Heart left ventricle (tissue), 16 donors: ENCODE measurements at regions of chr6 and their contacts with region 1.

Region 1: DNA sequence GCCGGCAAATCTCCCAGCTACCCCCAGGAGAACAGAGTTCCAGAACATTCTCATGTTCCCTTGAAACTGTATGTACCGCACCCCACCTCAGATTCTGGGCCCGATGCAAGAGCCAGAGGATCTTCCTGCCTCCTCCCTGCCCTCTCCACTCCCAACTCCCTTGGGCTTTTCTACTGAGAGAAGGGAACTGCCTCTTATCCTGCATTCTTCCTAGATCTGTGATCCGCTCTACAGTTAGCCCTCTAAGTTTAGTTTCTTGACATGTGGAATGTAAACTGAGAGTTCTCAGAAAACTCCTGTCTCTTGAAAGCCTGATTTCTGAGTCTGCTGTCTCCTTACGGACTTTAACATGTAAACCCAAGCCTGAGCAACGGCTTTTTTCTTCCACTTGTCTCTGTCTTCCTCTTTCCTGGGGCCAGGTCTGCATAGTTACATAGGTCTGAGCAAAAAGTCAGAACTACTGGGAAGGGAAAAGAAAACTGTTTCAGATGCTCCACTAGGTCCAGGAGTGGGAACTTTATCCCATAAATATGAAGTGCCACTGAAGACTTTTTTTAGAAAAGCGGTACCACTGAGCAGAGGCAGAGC is 86.5 kb upstream of the TNFAIP3 start:
- DNase-seq: no peak
- ATAC-seq: peak in 1 of 4 donors; percentile 40
- H3K4me3 ChIP-seq: no peak overlapping the region
- H3K27ac ChIP-seq: peak overlapping the region in 2 of 12 donors; percentile 15 to 74
- H3K4me1 ChIP-seq: peaks cover 0 to 23% (median 0%) of the 10 kb centered on the region in 12 donors
- H3K27me3 ChIP-seq: no peaks in the 10 kb centered on the region
- CTCF ChIP-seq: no peak
- POLR2A ChIP-seq: no peak

Region 2: GRCh38 chr6:137744877-137745276 is 35.7 kb before region 1 on chr6:
- intact Hi-C with region 1: loop called in 1 of 10 experiments (anchors 5 kb)
- DNase-seq: no peak
- ATAC-seq: no peak
- H3K4me3 ChIP-seq: no peak overlapping the region
- H3K27ac ChIP-seq: no peak overlapping the region
- H3K4me1 ChIP-seq: peaks cover 0 to 14% (median 2%) of the 10 kb centered on the region in 12 donors
- H3K27me3 ChIP-seq: no peaks in the 10 kb centered on the region
- CTCF ChIP-seq: no peak
- POLR2A ChIP-seq: no peak

Region 3: DNA sequence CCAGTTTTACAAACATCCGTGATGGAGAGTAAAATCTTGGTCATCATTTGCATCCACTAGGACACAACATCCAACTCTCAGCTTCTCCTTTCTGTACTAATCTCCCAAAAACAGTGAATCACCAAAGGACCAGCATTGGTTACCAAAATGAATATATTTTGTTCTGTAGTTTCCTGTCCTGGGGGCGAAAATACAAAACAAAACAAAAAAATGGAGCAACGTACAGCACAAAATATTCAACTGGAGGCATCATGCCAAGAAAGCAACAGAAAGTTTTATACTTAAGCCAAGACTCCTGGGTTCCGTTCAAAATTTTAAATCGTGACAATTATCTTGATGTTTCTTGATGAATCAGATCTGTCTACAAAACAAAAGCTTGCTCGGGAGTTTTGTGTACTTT is 866.5 kb after region 1 on chr6:
- intact Hi-C with region 1: no loop called
- DNase-seq: no peak
- ATAC-seq: no peak
- H3K4me3 ChIP-seq: peak overlapping the region in 3 of 12 donors; percentile 12 to 24 (median 14)
- H3K27ac ChIP-seq: no peak overlapping the region
- H3K4me1 ChIP-seq: no peaks in the 10 kb centered on the region
- H3K27me3 ChIP-seq: no peaks in the 10 kb centered on the region
- CTCF ChIP-seq: no peak
- POLR2A ChIP-seq: no peak